Endothelial cell of umbilical vein (primary cell): ENCODE measurements at regions of chr11 and their contacts with region 1.

Region 1: DNA sequence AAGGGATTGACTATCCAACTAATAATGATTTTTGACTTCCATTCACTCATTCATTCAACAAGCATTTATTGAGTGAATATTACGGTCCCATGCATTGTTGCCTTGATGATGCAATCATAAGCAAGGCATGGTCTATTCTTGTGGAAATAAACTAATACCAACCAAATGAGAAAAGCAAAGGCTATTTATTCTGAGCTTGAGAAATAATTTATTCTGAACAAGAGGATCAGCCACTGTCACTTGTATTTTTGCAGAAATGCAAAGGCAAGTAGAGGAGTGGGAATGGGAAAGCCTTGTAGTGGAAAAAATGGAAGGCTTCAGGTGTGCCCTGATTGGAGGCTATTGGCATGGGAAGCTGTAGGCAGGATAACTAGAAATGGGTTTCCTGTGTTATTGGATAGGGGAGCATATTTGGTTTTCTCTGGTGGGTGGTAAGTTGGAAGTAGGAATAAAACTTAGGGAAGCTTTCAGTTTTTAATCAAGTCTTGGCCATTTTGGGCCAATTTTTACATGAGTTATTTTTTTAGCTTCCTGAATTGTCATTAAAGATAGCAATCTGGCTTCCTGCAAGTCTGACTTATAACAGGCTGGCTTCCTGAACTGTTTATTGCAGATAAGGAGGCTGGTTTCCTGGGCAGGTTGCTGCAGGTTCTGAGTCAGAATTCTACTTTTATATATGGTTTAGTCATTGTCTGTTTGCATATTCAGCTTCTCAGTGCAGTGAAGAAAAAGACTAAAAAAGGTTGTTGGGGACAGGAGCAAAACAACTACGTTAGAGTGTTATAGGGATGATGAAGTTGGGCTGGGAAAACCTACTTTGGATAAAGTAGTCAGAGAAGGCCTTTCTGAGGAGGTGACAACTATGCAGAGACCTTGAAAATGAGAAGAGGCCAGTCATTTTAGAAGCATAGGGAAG is 106.7 kb downstream of the APIP start:
- DNase-seq: peak; percentile 98
- H3K4me3 ChIP-seq: no peak overlapping the region
- H3K27ac ChIP-seq: peak overlapping the region; percentile 80
- H3K4me1 ChIP-seq: peaks cover 24% of the 10 kb centered on the region
- H3K27me3 ChIP-seq: no peaks in the 10 kb centered on the region
- CTCF ChIP-seq: no peak
- POLR2A ChIP-seq: peak; percentile 91

Region 2: DNA sequence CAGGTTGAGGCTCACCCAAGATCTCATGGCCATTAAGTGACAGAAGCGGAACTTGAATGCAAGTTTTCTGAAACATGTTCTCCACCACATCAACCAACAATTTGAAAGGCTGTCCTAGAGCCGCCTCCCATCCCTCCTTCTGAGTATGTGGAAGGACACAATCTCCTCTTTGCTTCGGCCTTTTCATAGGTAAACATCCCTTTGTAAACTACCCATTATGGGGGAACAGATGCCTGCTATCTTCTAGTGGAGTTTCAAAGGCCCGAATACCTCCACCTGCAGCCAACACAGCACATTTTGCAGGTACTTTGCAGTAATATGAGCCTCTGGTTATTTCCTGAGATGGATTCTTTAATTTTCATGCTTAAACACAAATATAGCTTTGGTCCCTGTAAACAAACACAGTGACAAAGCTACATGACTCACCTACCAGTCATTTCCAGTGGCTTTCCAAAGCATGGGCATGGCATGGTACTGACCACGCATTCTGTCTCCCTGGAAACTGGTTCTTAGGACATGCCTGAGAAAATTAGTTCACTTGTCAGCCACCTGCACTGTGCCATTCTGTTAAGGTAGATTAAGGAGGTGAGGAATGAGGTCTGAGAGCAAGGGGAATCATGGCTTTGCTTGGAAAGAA is 128.4 kb before region 1 on chr11:
- CTCF ChIA-PET with region 1: no interaction called
- POLR2A ChIA-PET with region 1: no interaction called
- dilution Hi-C with region 1: no loop called
- intact Hi-C with region 1: loop called (anchors 1 kb)
- DNase-seq: peak; percentile 56
- H3K4me3 ChIP-seq: no peak overlapping the region
- H3K27ac ChIP-seq: no peak overlapping the region
- H3K4me1 ChIP-seq: peaks cover 17% of the 10 kb centered on the region
- H3K27me3 ChIP-seq: no peaks in the 10 kb centered on the region
- CTCF ChIP-seq: no peak
- POLR2A ChIP-seq: no peak

Region 3: DNA sequence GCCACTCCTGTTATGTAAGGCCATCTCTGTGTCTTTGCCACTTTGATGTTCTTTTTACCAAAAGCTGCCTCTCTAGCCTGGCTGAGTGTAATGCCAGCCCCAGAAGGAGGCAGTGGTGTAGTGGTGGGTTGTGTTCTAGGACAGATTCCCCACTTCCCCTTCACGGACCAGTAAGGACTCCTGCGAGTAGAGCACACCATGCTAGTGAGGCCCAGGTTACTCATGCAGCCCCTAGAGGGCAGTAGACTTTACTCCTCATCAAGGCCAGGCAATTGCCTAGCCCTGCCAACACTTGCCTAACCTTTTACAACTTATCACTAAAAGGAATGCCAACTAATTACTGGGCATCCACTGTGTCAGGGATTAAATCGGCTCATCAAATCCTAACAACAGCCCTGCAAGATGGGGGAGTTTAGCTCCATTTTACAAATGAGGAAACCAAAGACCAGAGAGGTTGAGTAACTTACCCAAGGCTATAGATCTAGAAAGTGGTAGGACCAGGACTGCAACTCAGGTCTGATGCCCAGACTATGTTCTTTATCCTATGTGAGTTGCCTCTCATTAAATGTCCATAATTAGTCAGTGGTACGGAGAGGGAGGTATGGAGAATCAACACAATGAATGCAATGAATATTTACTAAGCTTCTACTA is 31.4 kb after region 1 on chr11:
- CTCF ChIA-PET with region 1: interaction called, 4 read pairs
- POLR2A ChIA-PET with region 1: no interaction called
- dilution Hi-C with region 1: no loop called
- intact Hi-C with region 1: loop called (anchors 2 kb)
- DNase-seq: peak; percentile 11
- H3K4me3 ChIP-seq: no peak overlapping the region
- H3K27ac ChIP-seq: no peak overlapping the region
- H3K4me1 ChIP-seq: peaks cover 6% of the 10 kb centered on the region
- H3K27me3 ChIP-seq: no peaks in the 10 kb centered on the region
- CTCF ChIP-seq: peak; percentile 44 to 61
- POLR2A ChIP-seq: no peak

Region 4: DNA sequence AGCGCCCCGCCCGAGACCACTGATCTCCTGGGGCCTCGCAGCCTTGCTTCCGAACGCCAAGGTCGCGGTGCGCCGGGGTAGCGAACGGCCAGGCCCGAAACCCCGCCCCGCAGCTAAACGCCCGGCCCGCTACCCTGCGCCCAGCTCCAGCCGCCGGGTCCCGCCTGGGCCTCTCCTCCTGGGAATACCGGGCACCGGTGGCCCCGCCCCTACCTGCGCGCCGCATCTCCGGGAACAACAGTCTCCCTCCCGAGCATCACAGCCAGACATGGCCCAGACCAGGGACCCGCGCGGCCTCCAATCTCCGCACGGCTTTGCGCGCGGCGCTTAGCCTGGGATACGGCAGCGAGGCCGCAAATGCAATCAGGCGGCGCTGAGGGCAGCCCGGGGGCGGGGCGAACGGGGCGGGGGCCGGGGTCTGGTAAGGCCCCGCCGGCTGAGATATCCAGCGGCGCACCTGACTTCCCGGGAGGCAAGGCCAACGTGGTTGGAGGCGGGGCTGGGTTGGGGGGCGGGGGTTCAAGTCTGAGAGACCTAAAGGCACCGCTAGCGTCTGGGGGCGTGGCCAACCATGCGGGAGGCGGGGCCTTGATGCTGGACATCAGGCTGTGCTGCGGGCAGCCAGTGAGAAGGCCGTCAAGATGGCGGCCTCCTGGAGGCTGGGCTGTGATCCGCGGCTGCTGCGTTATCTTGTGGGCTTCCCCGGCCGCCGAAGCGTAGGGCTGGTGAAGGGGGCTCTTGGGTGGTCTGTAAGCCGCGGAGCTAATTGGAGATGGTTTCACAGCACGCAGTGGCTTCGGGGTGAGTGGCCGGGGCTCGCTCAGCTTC is 106.8 kb after region 1 on chr11 and contains the starts of genes APIP and PDHX:
- CTCF ChIA-PET with region 1: interaction called, 3 read pairs
- POLR2A ChIA-PET with region 1: no interaction called
- dilution Hi-C with region 1: no loop called
- intact Hi-C with region 1: loop called (anchors 1 kb)
- DNase-seq: peak; percentile 98
- H3K4me3 ChIP-seq: peak within 1 kb of the TSS; percentile 67 to 89 (median 80)
- H3K27ac ChIP-seq: peak within 1 kb of the TSS; percentile 88
- H3K4me1 ChIP-seq: peaks cover 15% of the 10 kb centered on the region
- H3K27me3 ChIP-seq: no peaks in the 10 kb centered on the region
- CTCF ChIP-seq: no peak
- POLR2A ChIP-seq: peak; percentile 98
- total RNA-seq, gene APIP: 25.9 and 26.9 TPM in 2 replicates
- total RNA-seq, gene PDHX: 30.5 and 33.2 TPM in 2 replicates